Dorsolateral prefrontal cortex (tissue), 120 donors: ENCODE measurements at regions of chr17 and their contacts with region 1.

Region 1: DNA sequence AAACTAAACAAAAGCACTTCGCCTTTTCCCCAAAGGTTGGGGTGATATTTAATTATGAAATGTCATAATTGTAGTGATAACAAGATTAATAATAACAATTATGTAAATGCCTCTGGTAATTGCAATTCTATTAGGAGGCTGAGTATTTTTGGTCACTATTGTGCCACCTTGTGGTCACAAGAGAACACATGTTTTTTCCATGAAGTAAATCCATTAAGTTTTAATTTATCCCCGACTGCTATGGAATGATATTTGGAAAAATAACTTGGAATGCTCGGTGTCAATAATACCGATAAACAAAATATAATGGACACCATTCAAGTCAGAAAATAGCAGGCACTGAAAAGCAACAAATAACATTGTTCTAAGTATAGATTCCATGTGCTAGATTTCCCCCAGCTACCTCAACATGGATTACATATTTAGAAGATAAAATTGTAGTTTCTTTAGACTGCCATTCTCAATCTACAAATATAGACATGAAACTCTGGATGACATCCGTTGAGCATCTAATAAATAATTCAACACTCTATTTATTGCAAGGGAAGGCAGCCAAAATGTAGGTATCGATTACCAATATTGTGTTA is 25.0 kb upstream of the KCNJ2 start:
- DNase-seq: no peak
- H3K4me3 ChIP-seq: peak overlapping the region in 7 of 59 donors; percentile 2 to 40 (median 25)
- H3K27ac ChIP-seq: peak overlapping the region in 1 of 59 donors; percentile 1
- H3K27me3 ChIP-seq: no peaks in the 10 kb centered on the region
- CTCF ChIP-seq: peak; percentile 69 to 96 (median 83)

Region 2: DNA sequence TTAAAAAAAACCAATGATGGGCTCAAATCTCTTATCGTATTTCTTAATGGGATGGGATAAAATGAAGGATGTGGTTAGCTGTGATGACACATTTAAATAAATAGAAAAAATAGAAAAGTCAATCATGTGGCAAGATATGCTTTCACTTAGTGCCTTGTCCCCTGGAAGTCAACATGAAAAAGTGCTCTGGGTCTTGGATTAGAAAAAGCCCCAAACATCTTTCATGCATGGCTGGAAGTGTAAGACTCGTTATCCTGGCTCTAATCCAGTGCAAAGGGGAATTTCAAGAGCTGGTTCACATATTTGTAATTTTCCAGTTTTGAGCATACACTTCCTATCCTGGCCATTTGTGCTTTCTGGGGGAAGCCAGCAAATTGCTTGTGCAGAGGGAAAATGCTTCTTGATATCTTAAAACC is 569.0 kb before region 1 on chr17:
- intact Hi-C with region 1: loop called in 1 of 2 experiments (anchors 10 kb)
- DNase-seq: no peak
- H3K4me3 ChIP-seq: no peak overlapping the region
- H3K27ac ChIP-seq: peak overlapping the region in 1 of 59 donors; percentile 2
- H3K27me3 ChIP-seq: no peaks in the 10 kb centered on the region
- CTCF ChIP-seq: no peak

Region 3: DNA sequence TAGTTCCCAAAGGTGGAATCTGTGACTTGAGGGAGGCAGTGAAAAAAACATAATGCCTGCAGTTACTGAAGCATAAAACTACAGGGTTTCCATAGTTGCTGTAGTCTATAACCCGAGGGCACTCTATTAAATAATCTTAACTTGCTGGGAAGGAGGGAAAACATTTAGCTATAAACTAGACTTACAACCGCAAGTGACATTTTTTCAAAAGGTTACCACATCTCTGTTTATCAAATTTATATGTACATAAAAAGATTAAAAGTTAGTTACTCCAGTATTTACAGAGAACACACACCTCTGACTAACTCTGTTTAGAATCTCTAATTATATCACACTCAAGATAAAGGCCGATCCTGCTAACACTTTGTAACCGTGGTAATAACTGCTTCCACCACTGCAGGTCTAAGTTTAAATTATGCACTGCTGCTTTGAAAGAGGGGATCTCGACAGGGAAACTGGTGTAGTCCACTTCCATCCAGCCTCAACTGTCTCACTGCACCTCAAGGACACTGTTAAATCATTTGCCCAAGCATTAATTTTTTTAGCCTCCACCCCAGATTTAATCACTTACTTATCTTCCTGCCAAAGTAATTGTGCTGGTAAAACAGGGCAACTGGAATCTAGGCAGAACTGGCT is 54.7 kb before region 1 on chr17:
- intact Hi-C with region 1: no loop called
- DNase-seq: no peak
- H3K4me3 ChIP-seq: no peak overlapping the region
- H3K27ac ChIP-seq: no peak overlapping the region
- H3K27me3 ChIP-seq: no peaks in the 10 kb centered on the region
- CTCF ChIP-seq: no peak

Region 4: DNA sequence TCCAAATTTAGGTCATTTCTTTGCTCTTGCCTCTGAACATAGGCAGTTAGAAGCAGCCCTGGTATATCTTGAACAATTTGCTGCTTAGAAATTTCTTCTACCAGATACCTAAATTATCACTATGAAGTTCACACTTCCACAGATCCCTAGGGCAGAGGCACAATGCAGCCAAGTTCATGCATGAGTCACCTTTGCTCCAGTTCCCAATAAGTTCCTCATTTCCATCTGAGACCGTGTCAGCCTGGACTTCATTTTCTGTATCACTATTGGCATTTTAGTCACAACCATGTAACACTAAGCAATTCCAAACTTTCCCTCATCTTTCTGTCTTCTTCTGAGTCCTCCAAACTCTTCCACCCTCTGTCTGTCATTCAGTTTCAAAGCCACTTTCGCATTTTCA is 24.4 kb before region 1 on chr17:
- intact Hi-C with region 1: no loop called
- DNase-seq: no peak
- H3K4me3 ChIP-seq: no peak overlapping the region
- H3K27ac ChIP-seq: no peak overlapping the region
- H3K27me3 ChIP-seq: no peaks in the 10 kb centered on the region
- CTCF ChIP-seq: no peak